Vagina (tissue), 2 donors: ENCODE measurements at regions of chr21 and their contacts with region 1.

Region 1: GRCh38 chr21:20440338-20440737 is 557.9 kb upstream of the NCAM2 start:
- DNase-seq: no peak
- H3K4me3 ChIP-seq: no peak overlapping the region
- H3K27ac ChIP-seq: no peak overlapping the region
- H3K4me1 ChIP-seq: no peaks in the 10 kb centered on the region
- H3K27me3 ChIP-seq: no peaks in the 10 kb centered on the region
- CTCF ChIP-seq: no peak
- POLR2A ChIP-seq: no peak

Region 2: GRCh38 chr21:20486303-20486702 is 46.0 kb after region 1 on chr21:
- intact Hi-C with region 1: loop called (anchors 2 kb)
- DNase-seq: no peak
- H3K4me3 ChIP-seq: no peak overlapping the region
- H3K27ac ChIP-seq: no peak overlapping the region
- H3K4me1 ChIP-seq: no peaks in the 10 kb centered on the region
- H3K27me3 ChIP-seq: no peaks in the 10 kb centered on the region
- CTCF ChIP-seq: no peak
- POLR2A ChIP-seq: no peak